Activated CD4-positive, alpha-beta T cell treated with anti-CD3 and anti-CD28 coated beads, Interleukin-2, amount 10 ng/mL, durations not matched to agents 24 days and 14 days (primary cell): ENCODE measurements at regions of chr15 and their contacts with region 1.

Region 1: DNA sequence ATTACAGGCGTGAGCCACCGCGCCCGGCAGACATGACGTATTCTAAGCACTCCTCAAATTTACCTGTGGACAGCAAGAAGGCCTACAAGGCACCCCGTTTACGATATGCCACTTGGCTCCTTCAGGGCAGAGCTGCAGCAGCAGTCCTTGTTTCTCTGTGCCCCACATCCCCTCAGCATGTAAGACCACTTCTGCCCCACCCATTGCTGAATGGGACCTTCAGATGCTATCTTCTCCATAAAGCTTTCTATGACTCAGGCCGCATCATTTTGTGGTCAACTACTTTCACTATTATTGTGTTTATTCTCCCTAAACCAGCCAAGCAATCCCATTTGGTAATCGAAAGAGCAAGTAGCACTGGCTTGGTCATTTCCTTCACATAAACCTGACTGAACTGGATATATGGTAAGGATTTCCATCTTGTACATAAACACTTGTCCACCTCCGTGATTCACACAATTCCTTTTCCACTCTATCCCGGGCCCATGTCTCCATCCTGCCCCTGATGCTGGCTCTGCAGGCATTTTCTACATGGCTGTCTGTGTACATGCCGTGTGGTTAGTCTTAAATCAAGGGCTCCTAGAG is 25.7 kb downstream of the LIPC start:
- DNase-seq: peak; percentile 82
- H3K4me3 Mint-ChIP-seq: peak overlapping the region; percentile 50
- H3K27ac Mint-ChIP-seq: peak overlapping the region; percentile 84
- H3K4me1 Mint-ChIP-seq: peaks cover 83% of the 10 kb centered on the region
- H3K27me3 Mint-ChIP-seq: no peaks in the 10 kb centered on the region

Region 2: GRCh38 chr15:58420579-58421043 is 36.9 kb before region 1 on chr15:
- intact Hi-C with region 1: loop called (anchors 2 kb)
- DNase-seq: peak; percentile 57
- H3K4me3 Mint-ChIP-seq: no peak overlapping the region
- H3K27ac Mint-ChIP-seq: peak overlapping the region; percentile 49
- H3K4me1 Mint-ChIP-seq: peaks cover 19% of the 10 kb centered on the region
- H3K27me3 Mint-ChIP-seq: no peaks in the 10 kb centered on the region

Region 3: GRCh38 chr15:58438956-58439355 is 18.5 kb before region 1 on chr15:
- intact Hi-C with region 1: loop called (anchors 1 kb)
- DNase-seq: peak; percentile 85
- H3K4me3 Mint-ChIP-seq: no peak overlapping the region
- H3K27ac Mint-ChIP-seq: no peak overlapping the region
- H3K4me1 Mint-ChIP-seq: peaks cover 33% of the 10 kb centered on the region
- H3K27me3 Mint-ChIP-seq: no peaks in the 10 kb centered on the region

Region 4: GRCh38 chr15:58475573-58476524 is 18.4 kb after region 1 on chr15:
- intact Hi-C with region 1: loop called (anchors 1 kb)
- DNase-seq: no peak
- H3K4me3 Mint-ChIP-seq: peak overlapping the region; percentile 46
- H3K27ac Mint-ChIP-seq: peak overlapping the region; percentile 92
- H3K4me1 Mint-ChIP-seq: peaks cover 54% of the 10 kb centered on the region
- H3K27me3 Mint-ChIP-seq: no peaks in the 10 kb centered on the region

Region 5: DNA sequence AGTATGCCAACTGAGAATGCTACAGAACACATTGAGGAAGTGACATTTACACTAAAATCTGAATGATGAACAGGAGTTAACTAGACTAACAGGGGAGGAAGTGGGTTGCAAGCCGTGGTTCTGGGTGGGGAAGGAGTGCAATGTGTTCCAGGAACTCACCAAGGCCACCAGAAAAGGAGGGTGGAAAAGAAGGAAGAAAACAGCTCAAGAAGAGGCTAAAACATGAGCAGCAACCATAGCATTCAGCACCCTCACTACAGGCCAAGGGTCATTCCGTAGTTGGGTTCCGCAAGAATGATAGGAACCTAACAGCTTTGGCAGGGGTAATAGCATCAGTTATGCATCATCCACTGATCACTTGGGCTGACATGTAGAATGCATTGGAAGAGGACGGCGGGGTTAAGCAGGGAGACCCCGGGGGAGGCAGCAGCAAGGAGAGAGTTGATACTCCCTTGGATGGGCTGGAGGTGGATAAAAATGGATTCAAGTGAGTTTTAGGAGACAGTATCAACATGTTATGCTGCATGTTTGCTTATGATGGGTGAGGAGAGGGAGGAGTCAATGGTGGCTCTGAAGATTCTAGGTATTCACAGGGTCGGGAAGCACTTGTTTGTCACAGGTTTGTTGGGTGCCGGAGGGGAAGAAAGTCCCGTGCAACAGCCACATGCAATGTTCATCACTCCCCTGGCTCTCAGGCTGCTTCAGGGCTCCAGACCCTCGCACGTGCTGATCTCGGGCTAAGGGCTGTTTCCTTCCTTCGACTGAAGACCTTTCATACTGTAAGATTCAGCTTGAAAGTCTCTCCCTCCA is 27.5 kb after region 1 on chr15:
- intact Hi-C with region 1: loop called (anchors 2 kb)
- DNase-seq: peak; percentile 89
- H3K4me3 Mint-ChIP-seq: peak overlapping the region; percentile 59
- H3K27ac Mint-ChIP-seq: peak overlapping the region; percentile 96
- H3K4me1 Mint-ChIP-seq: peaks cover 42% of the 10 kb centered on the region
- H3K27me3 Mint-ChIP-seq: no peaks in the 10 kb centered on the region

Region 6: GRCh38 chr15:58517682-58518525 is 60.4 kb after region 1 on chr15:
- intact Hi-C with region 1: loop called (anchors 1 kb)
- DNase-seq: peak; percentile 77
- H3K4me3 Mint-ChIP-seq: peak overlapping the region; percentile 37
- H3K27ac Mint-ChIP-seq: peak overlapping the region; percentile 86
- H3K4me1 Mint-ChIP-seq: peaks cover 70% of the 10 kb centered on the region
- H3K27me3 Mint-ChIP-seq: no peaks in the 10 kb centered on the region

Region 7: DNA sequence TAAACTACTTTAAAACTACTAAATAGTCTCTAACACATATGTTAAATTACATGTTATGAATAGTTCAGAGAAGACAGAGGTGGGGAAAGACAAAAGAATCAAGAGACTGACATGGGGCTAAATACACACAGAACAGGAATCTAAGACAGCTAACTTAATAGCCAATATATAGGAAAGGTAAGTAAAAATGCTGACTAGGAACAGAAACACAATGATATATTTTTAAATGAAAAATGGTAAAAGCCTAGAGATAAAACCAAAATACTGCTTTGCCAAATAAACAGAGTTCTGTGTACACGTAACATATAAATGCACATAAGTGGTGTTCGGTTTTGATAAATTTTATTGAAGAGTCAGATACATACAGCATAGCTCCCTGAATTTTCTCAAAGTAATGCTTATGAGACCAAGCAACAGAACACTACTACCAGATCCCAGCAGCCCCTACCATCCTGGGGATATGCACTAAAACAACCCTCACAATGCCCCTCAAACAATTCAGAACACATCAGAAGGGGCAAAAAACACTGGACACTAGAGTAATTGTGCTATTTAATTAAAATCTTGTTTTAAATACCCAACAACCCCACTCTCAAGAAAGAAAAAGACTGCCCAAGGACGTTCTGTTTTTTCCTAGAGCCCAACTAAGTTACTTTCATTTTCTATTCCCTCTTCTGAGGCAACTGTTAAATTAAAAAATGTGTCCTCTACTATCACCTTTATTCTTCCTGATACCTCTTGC is 170.9 kb after region 1 on chr15:
- intact Hi-C with region 1: loop called (anchors 5 kb)
- DNase-seq: peak; percentile 69
- H3K4me3 Mint-ChIP-seq: peak overlapping the region; percentile 84
- H3K27ac Mint-ChIP-seq: peak overlapping the region; percentile 93
- H3K4me1 Mint-ChIP-seq: peaks cover 49% of the 10 kb centered on the region
- H3K27me3 Mint-ChIP-seq: no peaks in the 10 kb centered on the region